ENCODE measurements at regions of chr3 and their contacts with region 1.

Region 1: DNA sequence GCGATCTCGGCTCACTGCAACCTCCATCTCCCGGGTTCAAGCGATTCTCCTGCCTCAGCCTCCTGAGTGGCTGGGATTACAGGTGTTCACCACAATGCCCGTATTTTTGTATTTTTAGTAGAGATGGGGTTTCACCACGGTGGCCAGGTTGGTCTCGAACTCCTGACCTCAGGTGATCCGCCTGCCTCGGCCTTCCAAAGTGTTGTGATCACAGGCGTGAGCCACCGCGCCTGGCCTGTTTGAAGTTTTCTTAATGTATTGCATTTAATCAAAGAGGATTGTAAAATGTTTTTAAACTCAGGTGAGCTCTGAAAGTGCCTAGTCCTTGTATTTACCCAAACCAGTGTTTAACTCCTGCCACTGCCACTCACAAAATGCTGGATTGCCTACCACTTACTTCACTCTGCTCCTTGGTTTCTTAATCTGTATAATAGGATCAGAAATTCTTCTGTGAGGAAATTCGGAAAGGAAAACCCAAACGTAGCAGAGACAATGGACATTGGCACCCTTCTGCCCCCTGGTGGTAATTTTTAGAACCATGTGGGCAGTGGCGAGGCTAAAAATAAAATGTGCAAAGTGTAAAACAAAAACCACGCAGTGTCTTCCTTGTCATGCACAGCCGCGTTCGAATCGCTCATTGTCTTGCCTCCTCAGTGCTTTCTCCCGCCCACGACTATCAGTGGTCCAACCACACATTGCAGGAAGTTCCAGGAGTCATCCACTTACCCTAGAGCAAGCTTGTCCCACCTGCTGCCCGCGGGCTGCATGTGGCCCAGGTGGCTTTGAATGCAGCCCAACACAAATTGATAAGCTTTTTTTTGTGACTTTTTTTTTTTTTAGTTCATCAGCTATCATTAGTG is 27.3 kb downstream of the CEP19 start:
- DNase-seq: peak; percentile 55 to 72 (median 65)
- ATAC-seq: peak; percentile 75
- H3K4me3 ChIP-seq: no peak overlapping the region
- H3K27ac ChIP-seq: no peak overlapping the region
- H3K4me1 ChIP-seq: no peaks in the 10 kb centered on the region
- H3K27me3 ChIP-seq: no peaks in the 10 kb centered on the region
- CTCF ChIP-seq: peak; percentile 82 to 88 (median 87)
- POLR2A ChIP-seq: no peak

Region 2: DNA sequence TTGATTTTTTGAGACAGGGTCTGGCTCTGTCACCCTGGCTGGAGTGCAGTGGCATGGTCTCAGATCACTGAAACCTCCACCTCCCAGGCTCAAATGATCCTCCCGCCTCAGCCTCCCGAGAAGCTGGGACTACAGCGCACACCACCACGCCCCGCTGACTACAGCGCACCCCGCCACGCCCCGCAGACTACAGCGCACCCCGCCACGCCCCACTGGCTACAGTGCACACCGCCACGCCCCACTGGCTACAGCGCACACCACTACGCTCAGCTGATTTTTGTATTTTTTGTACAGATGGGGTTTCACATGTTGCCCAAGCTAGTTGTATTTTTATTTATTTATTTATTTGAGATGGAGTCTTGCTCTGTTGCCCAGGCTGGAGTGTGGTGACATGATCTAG is 432.9 kb before region 1 on chr3:
- intact Hi-C with region 1: loop called (anchors 10 kb)
- DNase-seq: no peak
- ATAC-seq: no peak
- H3K4me3 ChIP-seq: no peak overlapping the region
- H3K27ac ChIP-seq: no peak overlapping the region
- H3K4me1 ChIP-seq: no peaks in the 10 kb centered on the region
- H3K27me3 ChIP-seq: no peaks in the 10 kb centered on the region
- CTCF ChIP-seq: no peak
- POLR2A ChIP-seq: no peak

Region 3: GRCh38 chr3:196609343-196609775 is 75.4 kb before region 1 on chr3:
- intact Hi-C with region 1: loop called (anchors 5 kb)
- DNase-seq: peak; percentile 85 to 93 (median 90)
- ATAC-seq: peak; percentile 90
- H3K4me3 ChIP-seq: no peak overlapping the region
- H3K27ac ChIP-seq: no peak overlapping the region
- H3K4me1 ChIP-seq: no peaks in the 10 kb centered on the region
- H3K27me3 ChIP-seq: no peaks in the 10 kb centered on the region
- CTCF ChIP-seq: peak; percentile 65 to 78 (median 74)
- POLR2A ChIP-seq: no peak

Measured in body of pancreas (tissue), 4 donors.